RWPE1 (cell line): ENCODE measurements at regions of chr15 and their contacts with region 1.

Region 1: DNA sequence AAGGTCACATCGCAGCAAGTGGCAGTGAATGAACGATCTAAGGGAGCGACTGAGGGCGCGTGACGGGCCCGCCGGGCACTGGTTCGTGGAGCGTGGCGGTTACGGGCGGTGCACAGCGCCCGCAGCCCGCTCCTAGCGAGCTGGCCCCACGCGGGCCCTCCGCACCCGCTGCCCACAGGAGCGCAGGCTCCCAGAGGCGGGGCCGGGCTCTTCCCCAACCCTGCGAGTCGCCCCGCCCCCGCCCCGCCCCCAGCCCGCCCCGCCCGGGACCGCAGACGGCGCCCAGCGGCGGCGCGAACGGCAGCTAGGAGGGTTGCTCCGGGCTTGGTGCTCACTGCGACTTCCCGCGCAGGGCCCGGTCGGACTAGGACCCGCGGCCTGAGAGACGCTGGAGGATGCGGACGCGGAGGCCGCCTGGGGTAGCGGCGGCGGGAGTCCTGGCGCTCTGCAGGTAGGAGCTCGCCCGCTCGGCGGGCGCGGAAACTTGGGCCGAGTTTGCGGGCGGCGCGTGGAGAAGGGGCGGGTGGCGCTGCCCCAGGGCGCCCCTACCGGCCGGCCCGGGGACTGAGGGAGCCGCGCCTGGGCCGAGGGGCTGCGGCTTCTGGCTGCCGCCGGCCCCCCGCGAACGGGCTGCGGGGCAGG is at the start of gene C15orf39:
- DNase-seq: peak; percentile 89
- H3K27ac ChIP-seq: peak within 1 kb of the TSS; percentile 90
- CTCF ChIP-seq: peak; percentile 98

Region 2: GRCh38 chr15:74127260-74127953 is 1074.3 kb before region 1 on chr15:
- CTCF ChIA-PET with region 1: no interaction called
- POLR2A ChIA-PET with region 1: no interaction called
- DNase-seq: peak; percentile 79
- H3K27ac ChIP-seq: no peak overlapping the region
- CTCF ChIP-seq: peak; percentile 99

Region 3: DNA sequence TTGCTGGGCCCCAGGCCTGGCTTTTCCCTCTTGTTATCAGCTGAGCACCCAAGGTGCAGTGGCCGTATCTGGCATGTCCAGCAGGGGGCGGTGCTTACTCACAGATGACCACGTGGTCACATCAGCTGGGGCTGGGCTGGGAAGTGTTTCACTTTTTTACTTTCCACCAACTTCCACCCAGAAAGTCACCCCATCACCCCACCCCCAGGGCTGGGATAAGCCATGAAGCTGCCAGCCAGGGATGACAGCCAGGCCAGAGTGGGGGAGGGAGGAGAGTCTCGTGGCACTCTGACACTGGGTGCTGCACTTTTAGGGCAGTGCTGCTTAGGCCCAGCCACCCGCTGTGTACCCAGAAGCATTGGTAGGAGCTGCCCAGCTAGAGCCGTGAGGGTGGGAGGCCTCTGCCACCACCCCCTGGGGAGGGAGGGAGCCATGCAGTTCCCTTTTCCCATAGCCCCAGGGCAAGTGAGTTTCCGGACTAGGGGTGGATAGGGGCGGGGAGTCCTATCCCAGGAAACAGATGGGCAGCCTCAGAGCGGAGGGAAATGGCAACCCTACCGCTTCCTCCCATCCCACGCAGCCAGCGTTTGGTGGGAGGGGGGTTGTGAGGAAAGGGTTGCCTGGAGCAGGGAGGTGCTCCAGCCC is 172.2 kb before region 1 on chr15:
- CTCF ChIA-PET with region 1: interaction called, 134 read pairs
- POLR2A ChIA-PET with region 1: interaction called, 5 read pairs
- DNase-seq: peak; percentile 92
- H3K27ac ChIP-seq: peak overlapping the region; percentile 90
- CTCF ChIP-seq: peak; percentile 95

Region 4: DNA sequence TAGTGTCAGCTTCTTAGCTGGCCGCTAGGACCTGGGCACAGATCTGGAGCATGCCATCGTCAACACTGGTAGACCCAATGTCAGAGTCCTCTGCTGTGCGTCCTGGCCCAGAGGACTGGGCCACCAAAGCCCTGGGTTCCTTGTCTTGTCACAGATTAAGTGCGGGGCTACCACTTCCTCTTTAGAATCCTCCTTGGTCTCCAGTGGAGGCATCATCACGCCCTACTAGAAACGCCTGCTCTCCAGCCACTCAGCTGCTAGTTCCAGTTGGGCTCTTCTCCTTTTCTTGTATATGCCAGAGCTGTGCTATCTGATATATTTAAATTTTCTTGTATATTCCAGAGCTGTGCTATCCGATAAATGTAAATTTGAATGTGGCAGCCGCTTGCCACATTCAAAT is 167.1 kb before region 1 on chr15:
- CTCF ChIA-PET with region 1: interaction called, 134 read pairs
- POLR2A ChIA-PET with region 1: interaction called, 5 read pairs
- DNase-seq: no peak
- H3K27ac ChIP-seq: no peak overlapping the region
- CTCF ChIP-seq: no peak

Region 5: GRCh38 chr15:75153087-75153486 is 48.6 kb before region 1 on chr15:
- CTCF ChIA-PET with region 1: no interaction called
- POLR2A ChIA-PET with region 1: no interaction called
- DNase-seq: peak; percentile 59
- H3K27ac ChIP-seq: no peak overlapping the region
- CTCF ChIP-seq: no peak

Region 6: GRCh38 chr15:75237316-75237982 is 35.7 kb after region 1 on chr15:
- CTCF ChIA-PET with region 1: no interaction called
- POLR2A ChIA-PET with region 1: no interaction called
- DNase-seq: no peak
- H3K27ac ChIP-seq: no peak overlapping the region
- CTCF ChIP-seq: no peak

Region 7: GRCh38 chr15:75672646-75673425 is 471.1 kb after region 1 on chr15:
- CTCF ChIA-PET with region 1: no interaction called
- POLR2A ChIA-PET with region 1: no interaction called
- DNase-seq: no peak
- H3K27ac ChIP-seq: peak overlapping the region; percentile 98
- CTCF ChIP-seq: no peak